Heart left ventricle (tissue), 16 donors: ENCODE measurements at regions of chr1 and their contacts with region 1.

Region 1: DNA sequence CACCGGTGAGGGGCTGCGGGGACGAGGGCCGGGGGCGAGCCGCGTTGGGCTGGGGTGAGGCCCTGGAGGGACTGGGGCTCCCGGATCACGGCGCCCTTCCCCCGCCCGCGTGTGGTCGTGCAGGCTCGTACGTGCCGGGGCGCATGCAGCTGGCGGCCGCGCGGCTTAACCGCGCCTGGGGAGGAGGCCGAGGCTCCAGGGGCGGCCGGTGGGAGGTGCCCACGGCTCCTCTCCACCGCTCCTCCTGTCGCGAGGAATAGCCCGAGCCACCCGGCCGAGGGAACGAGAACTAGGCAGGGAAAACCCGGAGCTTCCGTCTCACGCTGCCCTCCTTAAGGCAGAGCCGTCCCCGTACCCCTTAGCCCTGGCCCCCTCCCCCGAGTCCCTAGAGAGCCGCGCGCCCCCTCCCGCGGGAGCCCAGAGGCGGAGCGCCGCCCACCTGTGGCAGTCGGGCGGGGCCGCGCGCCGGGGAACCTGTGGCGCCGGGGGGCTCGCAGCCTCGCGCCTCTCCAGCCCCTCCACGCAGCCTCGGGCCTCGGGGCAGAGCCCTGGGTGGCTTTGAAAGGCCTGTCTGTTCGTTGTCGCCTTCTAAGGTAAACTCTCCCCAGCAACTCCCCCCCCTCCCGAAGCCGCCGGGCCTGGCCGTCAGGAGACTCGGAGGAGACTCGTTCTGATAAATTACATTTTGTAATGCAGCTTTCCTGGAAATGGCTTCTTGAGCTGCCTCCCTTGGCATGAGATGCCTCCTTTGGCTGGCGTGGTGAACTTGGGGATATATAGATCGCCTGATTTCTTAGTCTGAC is 746 bp downstream of the AK4 start:
- DNase-seq: peak; percentile 41 to 80 (median 53)
- ATAC-seq: peak; percentile 31 to 79 (median 72)
- H3K4me3 ChIP-seq: peak overlapping the region; percentile 70 to 95 (median 90)
- H3K27ac ChIP-seq: peak overlapping the region; percentile 83 to 96 (median 92)
- H3K4me1 ChIP-seq: peaks cover 4 to 29% (median 12%) of the 10 kb centered on the region in 12 donors
- H3K27me3 ChIP-seq: no peaks in the 10 kb centered on the region
- CTCF ChIP-seq: no peak
- POLR2A ChIP-seq: no peak

Region 2: GRCh38 chr1:64891448-64891825 is 257.3 kb before region 1 on chr1:
- intact Hi-C with region 1: no loop called
- DNase-seq: no peak
- ATAC-seq: peak; percentile 48 to 71 (median 60)
- H3K4me3 ChIP-seq: peak overlapping the region in 3 of 12 donors; percentile 1 to 30 (median 6)
- H3K27ac ChIP-seq: peak overlapping the region in 11 of 12 donors; percentile 9 to 62 (median 48)
- H3K4me1 ChIP-seq: peaks cover 23 to 95% (median 57%) of the 10 kb centered on the region in 12 donors
- H3K27me3 ChIP-seq: no peaks in the 10 kb centered on the region
- CTCF ChIP-seq: no peak
- POLR2A ChIP-seq: no peak

Region 3: DNA sequence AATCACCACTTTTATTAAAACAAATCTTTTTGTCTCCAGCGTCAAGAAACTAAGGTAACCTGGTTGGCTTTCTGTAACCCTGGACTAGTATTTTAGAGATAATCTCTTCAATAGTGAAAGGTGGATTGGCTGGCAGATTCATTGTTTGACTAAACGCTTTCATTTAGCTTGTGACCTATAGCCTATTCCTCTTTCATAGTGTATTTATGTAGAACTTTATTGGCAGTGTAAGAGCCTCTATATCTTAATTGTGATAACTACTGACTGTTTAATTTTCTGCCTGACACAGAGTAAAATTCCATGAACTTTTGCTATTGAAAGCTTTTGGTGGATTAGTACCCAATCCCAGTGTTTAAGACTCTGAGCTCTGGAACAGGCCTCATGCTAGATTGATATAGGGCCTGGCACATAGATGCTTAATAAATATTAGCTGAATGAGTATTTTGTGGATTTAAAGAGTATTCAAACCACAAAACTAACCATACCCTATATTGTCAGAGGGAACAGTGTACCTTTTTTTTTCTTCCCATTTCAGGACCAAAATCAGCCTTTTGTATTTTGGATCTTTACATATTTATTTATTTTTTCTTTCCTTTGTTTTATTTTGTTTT is 34.0 kb after region 1 on chr1:
- intact Hi-C with region 1: loop called in 1 of 10 experiments (anchors 5 kb)
- DNase-seq: no peak
- ATAC-seq: no peak
- H3K4me3 ChIP-seq: no peak overlapping the region
- H3K27ac ChIP-seq: no peak overlapping the region
- H3K4me1 ChIP-seq: peaks cover 0 to 34% (median 10%) of the 10 kb centered on the region in 12 donors
- H3K27me3 ChIP-seq: no peaks in the 10 kb centered on the region
- CTCF ChIP-seq: no peak
- POLR2A ChIP-seq: no peak